Activated CD8-positive, alpha-beta T cell treated with anti-CD3 and anti-CD28 coated beads for 36 hours (primary cell): ENCODE measurements at regions of chr20 and their contacts with region 1.

Region 1: GRCh38 chr20:43448748-43449535 is 8.8 kb upstream of the SRSF6 start:
- DNase-seq: peak; percentile 63
- ATAC-seq: peak; percentile 72
- H3K4me3 Mint-ChIP-seq: no peak overlapping the region
- H3K27ac Mint-ChIP-seq: no peak overlapping the region
- H3K4me1 Mint-ChIP-seq: peaks cover 3% of the 10 kb centered on the region
- H3K27me3 Mint-ChIP-seq: peaks cover 28% of the 10 kb centered on the region
- CTCF ChIP-seq: peak; percentile 77

Region 2: GRCh38 chr20:43514062-43514999 is 65.4 kb after region 1 on chr20:
- CTCF ChIA-PET with region 1: interaction called, 10 read pairs
- POLR2A ChIA-PET with region 1: no interaction called
- intact Hi-C with region 1: no loop called
- DNase-seq: peak; percentile 98
- ATAC-seq: peak; percentile 95
- H3K4me3 Mint-ChIP-seq: peak overlapping the region; percentile 91
- H3K27ac Mint-ChIP-seq: peak overlapping the region; percentile 93
- H3K4me1 Mint-ChIP-seq: peaks cover 9% of the 10 kb centered on the region
- H3K27me3 Mint-ChIP-seq: peaks cover 3% of the 10 kb centered on the region
- CTCF ChIP-seq: no peak